Activated CD4-positive, alpha-beta T cell treated with anti-CD3 and anti-CD28 coated beads for 36 hours (primary cell): ENCODE measurements at regions of chr1 and their contacts with region 1.

Region 1: DNA sequence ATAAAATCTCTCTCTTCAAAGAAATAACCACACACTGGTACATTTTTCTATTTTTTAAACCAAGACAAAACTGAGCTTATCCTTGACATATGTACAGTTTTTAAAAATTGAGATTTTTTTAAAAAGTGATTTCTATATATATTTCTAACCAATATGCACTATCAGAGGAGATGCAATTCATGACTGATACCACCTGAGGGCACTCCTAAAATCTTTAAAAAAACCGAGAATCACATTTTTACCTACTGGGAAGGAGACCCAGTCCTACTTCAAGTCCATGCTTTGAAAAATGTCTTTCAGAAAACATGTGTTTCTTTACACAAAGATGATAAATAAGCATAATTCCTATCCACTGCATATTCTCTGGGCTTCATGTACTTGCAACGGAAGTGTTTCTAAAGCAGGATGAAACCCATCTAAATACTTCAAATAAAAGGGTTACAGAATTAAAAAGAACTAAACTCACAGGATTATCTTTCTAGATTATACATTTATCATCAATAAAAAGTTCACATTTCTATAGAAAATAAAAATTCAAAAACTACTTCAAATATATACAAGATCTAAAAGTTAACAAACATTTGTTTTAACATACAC is 98.6 kb downstream of the ENAH start:
- DNase-seq: no peak
- ATAC-seq: no peak
- H3K4me3 Mint-ChIP-seq: no peak overlapping the region
- H3K27ac Mint-ChIP-seq: no peak overlapping the region
- H3K4me1 Mint-ChIP-seq: no peaks in the 10 kb centered on the region
- H3K27me3 Mint-ChIP-seq: no peaks in the 10 kb centered on the region

Region 2: GRCh38 chr1:225772323-225772768 is 218.0 kb after region 1 on chr1:
- CTCF ChIA-PET with region 1: no interaction called
- POLR2A ChIA-PET with region 1: no interaction called
- intact Hi-C with region 1: loop called (anchors 1 to 2 kb)
- DNase-seq: peak; percentile 66
- ATAC-seq: peak; percentile 50
- H3K4me3 Mint-ChIP-seq: no peak overlapping the region
- H3K27ac Mint-ChIP-seq: no peak overlapping the region
- H3K4me1 Mint-ChIP-seq: peaks cover 2% of the 10 kb centered on the region
- H3K27me3 Mint-ChIP-seq: no peaks in the 10 kb centered on the region

Region 3: DNA sequence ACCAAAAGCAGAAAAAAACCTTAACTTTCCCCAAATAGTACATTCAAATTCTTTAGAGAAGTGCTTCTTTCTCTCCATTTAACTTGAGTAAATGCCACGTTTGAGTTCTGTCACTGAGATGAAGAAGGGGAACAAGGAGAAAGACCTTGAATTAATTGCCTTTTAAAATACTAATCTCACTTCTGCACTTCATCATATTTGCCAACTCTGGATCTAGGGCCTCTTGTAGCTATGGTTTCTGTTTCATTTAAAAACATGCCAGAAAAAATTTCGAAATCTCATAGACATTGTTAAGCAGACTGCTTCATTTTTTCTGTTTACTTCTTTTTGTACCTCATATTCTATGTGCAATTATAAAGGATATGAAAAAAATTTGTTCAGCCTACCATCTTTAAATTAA is 693.8 kb after region 1 on chr1:
- CTCF ChIA-PET with region 1: no interaction called
- POLR2A ChIA-PET with region 1: no interaction called
- intact Hi-C with region 1: no loop called
- DNase-seq: no peak
- ATAC-seq: no peak
- H3K4me3 Mint-ChIP-seq: no peak overlapping the region
- H3K27ac Mint-ChIP-seq: no peak overlapping the region
- H3K4me1 Mint-ChIP-seq: no peaks in the 10 kb centered on the region
- H3K27me3 Mint-ChIP-seq: no peaks in the 10 kb centered on the region